ENCODE measurements at regions of chr11 and their contacts with region 1.

Region 1: DNA sequence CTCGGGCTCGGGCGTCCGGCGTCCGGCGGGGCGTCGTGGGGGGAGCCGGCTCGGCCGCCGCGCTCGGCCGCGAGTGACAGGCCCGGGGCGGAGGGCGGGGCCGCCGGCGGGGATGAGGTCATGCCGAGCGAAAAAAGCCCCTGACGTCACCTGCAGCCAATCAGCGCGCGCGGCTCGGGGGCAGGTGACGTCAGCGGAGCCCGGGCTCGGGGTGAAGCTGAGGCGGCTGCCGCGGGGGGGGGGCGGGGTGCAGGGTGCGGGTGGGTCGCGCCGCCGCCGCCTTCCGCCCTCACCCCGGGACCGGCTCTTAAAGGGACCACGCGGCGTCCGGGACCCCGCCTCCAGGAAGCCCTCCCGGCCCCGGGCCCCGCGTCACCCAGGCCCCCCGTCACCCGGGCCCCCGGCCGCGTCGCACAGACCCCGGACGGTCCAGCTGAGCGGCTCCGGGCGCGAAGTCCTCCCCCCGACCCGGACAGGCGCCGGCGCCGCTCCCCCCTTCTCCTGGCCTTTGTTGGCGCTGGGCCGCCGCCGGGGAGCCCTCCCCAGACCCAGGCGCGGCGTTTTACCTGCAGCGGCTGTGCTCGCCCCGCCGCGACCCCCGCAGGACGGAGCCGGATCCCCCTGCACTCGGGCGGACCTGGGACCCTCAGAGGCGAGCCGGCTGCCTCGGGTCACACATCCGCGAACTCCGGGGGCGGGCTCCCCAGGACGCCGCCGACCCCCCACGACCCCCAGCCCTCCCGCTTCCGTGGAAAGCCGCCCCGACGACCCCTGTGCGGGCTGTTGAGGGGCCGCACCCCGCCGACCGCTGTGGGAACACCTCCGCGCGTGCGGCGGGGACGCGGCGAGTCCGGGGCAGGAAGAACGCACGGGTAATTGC is at the start of gene DUSP8:
- DNase-seq: peak; percentile 98
- H3K4me3 ChIP-seq: peak within 1 kb of the TSS; percentile 57 to 64
- H3K27ac ChIP-seq: peak within 1 kb of the TSS in 1 of 2 experiments; percentile 81; a peak in 2 of 4 replicates
- H3K4me1 ChIP-seq: peaks cover 0 to 33% of the 10 kb centered on the region in 2 experiments; a peak in 1 of 4 replicates
- H3K27me3 ChIP-seq: peaks cover 4% of the 10 kb centered on the region; the same call in 1 of the 2 replicates
- CTCF ChIP-seq: no peak
- EP300 ChIP-seq: no peak
- RAD21 ChIP-seq: no peak
- polyA plus RNA-seq, gene DUSP8: 2.0 and 2.2 TPM in 2 replicates

Region 2: DNA sequence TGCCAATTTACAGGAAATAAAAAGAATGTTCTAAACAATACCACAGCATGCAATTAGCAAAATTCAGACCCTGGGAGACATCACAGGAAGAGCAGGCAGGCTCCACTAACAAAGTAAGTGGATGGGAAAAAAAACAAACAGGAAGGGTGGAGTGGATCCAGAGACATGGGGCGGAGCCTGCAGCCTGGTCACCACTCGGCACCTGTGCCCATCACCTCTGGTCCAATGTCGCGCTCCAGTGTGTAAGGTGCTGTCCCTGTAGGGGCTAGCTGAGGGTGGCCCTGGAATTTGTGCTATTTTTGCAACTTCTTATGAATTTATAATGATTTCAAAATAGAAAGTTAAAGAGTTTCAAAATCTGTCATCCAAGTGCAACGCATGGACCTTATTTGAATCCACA is 74.8 kb before region 1 on chr11:
- CTCF ChIA-PET with region 1: no interaction called
- POLR2A ChIA-PET with region 1: no interaction called
- DNase-seq: peak; percentile 16
- H3K4me3 ChIP-seq: no peak overlapping the region
- H3K27ac ChIP-seq: no peak overlapping the region
- H3K4me1 ChIP-seq: peaks cover 0 to 21% of the 10 kb centered on the region in 2 experiments; a peak in 1 of 4 replicates
- H3K27me3 ChIP-seq: no peaks in the 10 kb centered on the region
- CTCF ChIP-seq: no peak
- EP300 ChIP-seq: no peak
- RAD21 ChIP-seq: no peak

Region 3: DNA sequence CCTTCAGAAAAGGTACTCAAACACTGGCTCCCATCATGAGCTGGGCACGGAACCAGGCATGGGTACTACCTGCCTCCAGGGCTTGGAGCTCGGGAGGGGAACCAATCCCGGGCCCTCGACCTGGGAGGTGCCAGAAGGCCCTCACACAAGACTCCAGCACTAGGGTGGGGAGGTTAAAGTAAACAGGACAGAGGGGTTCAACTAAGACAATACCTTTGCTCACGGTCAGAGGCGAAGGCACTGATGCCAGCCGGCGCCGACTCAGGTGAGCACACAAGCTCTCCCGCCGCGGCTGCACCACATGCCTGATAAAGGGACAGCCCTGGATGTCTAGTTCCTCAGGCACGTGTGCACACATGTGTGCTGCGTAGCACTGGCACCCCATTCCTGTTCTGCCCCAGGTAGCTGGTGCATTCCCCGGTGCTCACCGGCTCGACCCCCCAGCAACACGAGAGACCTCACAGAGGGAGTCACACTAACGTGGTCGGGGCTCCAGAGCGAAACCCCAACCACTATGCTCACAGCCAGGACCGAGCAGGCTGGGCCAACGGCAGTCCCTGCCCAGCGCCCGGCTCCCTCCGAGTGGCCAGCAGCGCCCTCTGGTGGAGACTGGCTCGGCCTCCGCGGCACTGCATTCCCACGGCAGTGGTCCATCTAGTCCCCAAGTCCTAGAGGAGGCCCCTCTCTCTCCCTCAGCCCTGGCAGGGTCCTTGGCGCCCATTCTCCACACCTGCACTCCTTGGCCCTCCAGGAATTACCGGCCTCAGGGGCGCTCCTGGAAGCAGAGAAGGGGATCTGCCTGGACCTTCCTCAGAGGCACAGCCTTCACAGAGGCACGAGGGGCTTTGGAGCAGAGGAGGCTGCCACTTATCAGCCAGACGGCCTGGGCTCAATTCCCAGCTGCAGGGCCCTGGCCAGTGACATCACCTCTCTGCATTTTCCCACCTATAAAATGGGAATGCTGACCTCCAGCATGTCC is 57.1 kb before region 1 on chr11:
- CTCF ChIA-PET with region 1: interaction called, 10 read pairs
- POLR2A ChIA-PET with region 1: no interaction called
- DNase-seq: peak; percentile 96
- H3K4me3 ChIP-seq: peak overlapping the region in 1 of 2 experiments; percentile 50; a peak in 1 of 4 replicates
- H3K27ac ChIP-seq: no peak overlapping the region; a peak in 1 of 4 replicates
- H3K4me1 ChIP-seq: peaks cover 0 to 29% of the 10 kb centered on the region in 2 experiments; a peak in 1 of 4 replicates
- H3K27me3 ChIP-seq: no peaks in the 10 kb centered on the region
- CTCF ChIP-seq: peak; percentile 86
- EP300 ChIP-seq: no peak
- RAD21 ChIP-seq: peak; percentile 91

Region 4: GRCh38 chr11:1546536-1547400 is 25.7 kb before region 1 on chr11:
- CTCF ChIA-PET with region 1: interaction called, 398 read pairs
- POLR2A ChIA-PET with region 1: interaction called, 4 read pairs
- DNase-seq: peak; percentile 97
- H3K4me3 ChIP-seq: peak overlapping the region; percentile 37 to 49; a peak in 3 of 4 replicates
- H3K27ac ChIP-seq: no peak overlapping the region
- H3K4me1 ChIP-seq: peaks cover 0 to 6% of the 10 kb centered on the region in 2 experiments; a peak in 1 of 4 replicates
- H3K27me3 ChIP-seq: peaks cover 12% of the 10 kb centered on the region
- CTCF ChIP-seq: peak; percentile 72
- EP300 ChIP-seq: no peak
- RAD21 ChIP-seq: peak; percentile 76

Region 5: GRCh38 chr11:1559119-1559951 is 13.1 kb before region 1 on chr11:
- CTCF ChIA-PET with region 1: interaction called, 46 read pairs
- POLR2A ChIA-PET with region 1: interaction called, 6 read pairs
- DNase-seq: peak; percentile 52
- H3K4me3 ChIP-seq: no peak overlapping the region
- H3K27ac ChIP-seq: peak overlapping the region in 1 of 2 experiments; percentile 71; a peak in 2 of 4 replicates
- H3K4me1 ChIP-seq: peaks cover 3 to 12% of the 10 kb centered on the region in 2 experiments; a peak in 2 of 4 replicates
- H3K27me3 ChIP-seq: no peaks in the 10 kb centered on the region
- CTCF ChIP-seq: no peak
- EP300 ChIP-seq: no peak
- RAD21 ChIP-seq: no peak

Region 6: DNA sequence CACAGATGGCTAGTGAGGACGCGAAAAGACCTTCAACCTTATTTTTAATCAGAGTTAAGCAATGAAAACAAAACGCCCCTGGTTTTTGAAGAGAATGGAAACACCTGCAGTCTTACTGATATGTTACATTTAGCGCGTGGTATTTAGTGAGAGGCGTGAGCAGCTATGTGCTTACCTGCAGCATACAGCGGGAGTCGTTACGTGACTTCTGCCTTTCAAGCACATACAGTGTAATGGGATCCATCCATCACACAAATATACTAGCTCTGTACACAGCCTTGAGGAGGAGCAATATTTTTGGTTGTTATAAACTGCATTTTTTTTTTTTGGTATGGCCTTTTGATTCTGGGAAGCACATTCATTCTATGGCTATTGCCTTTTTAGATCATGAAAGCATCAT is 20.2 kb after region 1 on chr11:
- CTCF ChIA-PET with region 1: interaction called, 64 read pairs
- POLR2A ChIA-PET with region 1: no interaction called
- DNase-seq: no peak
- H3K4me3 ChIP-seq: no peak overlapping the region
- H3K27ac ChIP-seq: no peak overlapping the region
- H3K4me1 ChIP-seq: no peaks in the 10 kb centered on the region
- H3K27me3 ChIP-seq: peaks cover 7% of the 10 kb centered on the region
- CTCF ChIP-seq: no peak
- EP300 ChIP-seq: no peak
- RAD21 ChIP-seq: no peak

Region 7: DNA sequence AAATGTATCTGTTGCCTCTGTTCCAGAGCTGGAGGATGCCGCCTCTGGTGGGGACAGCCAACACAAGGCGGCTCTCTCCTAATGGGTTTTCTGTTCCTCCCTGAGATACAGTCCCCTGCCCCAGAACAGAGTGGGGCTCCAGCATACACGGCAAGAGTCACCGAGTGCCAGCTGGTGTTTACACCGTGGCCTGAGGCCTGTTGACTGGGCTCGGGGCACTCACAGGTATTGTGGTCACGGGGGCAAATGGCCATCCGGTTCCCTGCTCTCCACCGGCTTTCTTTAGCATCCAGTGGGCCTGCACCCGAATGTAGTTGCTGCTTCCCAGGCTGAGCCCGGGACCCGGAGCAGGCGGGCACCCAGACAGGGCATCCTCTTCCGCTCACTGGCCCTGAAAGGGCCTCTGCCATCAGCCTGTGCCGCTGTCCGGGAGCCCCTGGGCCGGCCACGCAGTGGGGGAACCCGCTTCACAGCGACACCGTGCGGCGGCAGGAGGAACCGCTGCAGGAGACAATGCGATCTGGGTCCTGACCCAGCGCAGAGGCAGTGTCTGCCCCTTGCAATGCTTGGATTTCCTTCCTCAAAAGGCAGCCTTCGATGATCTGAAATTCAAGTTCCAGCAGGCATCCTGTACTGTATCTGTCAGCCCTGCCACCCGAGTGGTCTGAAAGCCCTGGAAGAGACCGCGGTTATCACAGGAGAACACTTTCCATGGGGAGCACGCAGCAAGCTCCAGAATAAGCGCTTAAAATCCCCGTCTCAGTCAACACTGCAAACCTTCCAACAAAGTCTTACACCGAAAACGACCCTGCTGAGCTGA is 56.3 kb after region 1 on chr11:
- CTCF ChIA-PET with region 1: interaction called, 19 read pairs
- POLR2A ChIA-PET with region 1: no interaction called
- DNase-seq: peak; percentile 96
- H3K4me3 ChIP-seq: peak overlapping the region in 1 of 2 experiments; percentile 35; a peak in 1 of 4 replicates
- H3K27ac ChIP-seq: no peak overlapping the region
- H3K4me1 ChIP-seq: peaks cover 0 to 11% of the 10 kb centered on the region in 2 experiments; a peak in 1 of 4 replicates
- H3K27me3 ChIP-seq: peaks cover 19% of the 10 kb centered on the region; the same call in 1 of the 2 replicates
- CTCF ChIP-seq: peak; percentile 85
- EP300 ChIP-seq: no peak
- RAD21 ChIP-seq: peak; percentile 69

Region 8: GRCh38 chr11:1669661-1670218 is 97.3 kb after region 1 on chr11:
- CTCF ChIA-PET with region 1: no interaction called
- POLR2A ChIA-PET with region 1: no interaction called
- DNase-seq: peak; percentile 27
- H3K4me3 ChIP-seq: no peak overlapping the region
- H3K27ac ChIP-seq: no peak overlapping the region
- H3K4me1 ChIP-seq: no peaks in the 10 kb centered on the region; a peak in 1 of 4 replicates
- H3K27me3 ChIP-seq: no peaks in the 10 kb centered on the region; the same call in 1 of the 2 replicates
- CTCF ChIP-seq: no peak
- EP300 ChIP-seq: no peak
- RAD21 ChIP-seq: no peak